Activated CD4-positive, alpha-beta T cell treated with anti-CD3 and anti-CD28 coated beads for 36 hours (primary cell): ENCODE measurements at regions of chr12 and their contacts with region 1.

Region 1: DNA sequence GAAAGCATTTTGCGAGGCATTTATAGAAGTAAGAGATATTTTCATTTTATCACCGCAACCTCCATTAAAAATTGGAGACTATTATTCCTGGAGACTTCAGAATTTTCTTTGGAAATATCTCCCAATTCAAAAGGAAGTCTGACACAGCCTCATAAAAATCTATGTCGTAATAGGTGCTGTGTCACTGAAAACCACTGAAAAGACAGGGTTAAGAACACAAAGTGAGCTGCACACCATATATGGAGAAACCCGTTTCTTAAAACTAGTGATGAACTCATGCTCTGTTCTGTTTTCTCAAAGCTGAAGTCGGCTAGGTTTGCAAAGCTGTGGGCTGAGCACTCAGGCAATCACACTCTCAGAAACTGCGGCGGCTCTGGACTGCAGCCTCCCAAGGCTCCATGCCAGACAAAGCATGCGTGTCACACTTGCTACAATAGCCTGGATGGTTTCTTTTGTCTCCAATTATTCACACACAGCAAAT is at the start of gene GLIPR1:
- DNase-seq: peak; percentile 86
- ATAC-seq: peak; percentile 83
- H3K4me3 Mint-ChIP-seq: peak within 1 kb of the TSS; percentile 93
- H3K27ac Mint-ChIP-seq: peak within 1 kb of the TSS; percentile 89
- H3K4me1 Mint-ChIP-seq: peaks cover 90% of the 10 kb centered on the region
- H3K27me3 Mint-ChIP-seq: no peaks in the 10 kb centered on the region
- total RNA-seq, gene GLIPR1: 8.7 to 9.3 TPM

Region 2: DNA sequence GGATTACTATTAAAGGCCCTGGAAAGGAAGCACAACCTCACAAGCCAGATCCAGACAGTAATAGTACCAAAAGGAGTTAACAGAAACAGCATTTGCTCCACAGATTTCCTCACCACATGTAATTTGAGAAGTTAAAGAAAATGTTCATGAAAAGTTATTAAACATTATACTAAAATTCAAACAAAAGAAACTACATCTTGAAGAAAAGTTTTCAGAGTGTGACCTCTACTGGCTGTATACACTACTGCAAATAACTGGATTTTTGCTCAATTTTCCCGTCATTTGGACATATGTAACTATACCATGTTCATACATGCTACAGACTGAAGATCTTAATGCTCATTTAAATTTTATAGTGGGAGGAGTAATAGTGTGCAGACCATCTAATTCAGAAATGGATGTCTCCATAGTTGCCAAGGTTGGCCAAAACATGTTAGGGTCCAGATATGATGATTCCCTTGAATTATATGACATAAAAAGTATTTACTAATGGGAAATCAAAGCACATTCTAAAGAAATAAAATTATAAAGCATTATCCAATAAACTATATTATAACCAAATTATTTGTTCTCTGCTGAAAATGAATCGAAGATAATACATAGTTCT is 25.3 kb after region 1 on chr12:
- CTCF ChIA-PET with region 1: interaction called, 147 read pairs
- POLR2A ChIA-PET with region 1: interaction called, 9 read pairs
- intact Hi-C with region 1: loop called (anchors 1 kb)
- DNase-seq: no peak
- ATAC-seq: no peak
- H3K4me3 Mint-ChIP-seq: no peak overlapping the region
- H3K27ac Mint-ChIP-seq: peak overlapping the region; percentile 11
- H3K4me1 Mint-ChIP-seq: peaks cover 30% of the 10 kb centered on the region
- H3K27me3 Mint-ChIP-seq: no peaks in the 10 kb centered on the region

Region 3: GRCh38 chr12:75641031-75641780 is 160.7 kb after region 1 on chr12:
- CTCF ChIA-PET with region 1: no interaction called
- POLR2A ChIA-PET with region 1: interaction called, 4 read pairs
- intact Hi-C with region 1: loop called in 1 of 2 experiments (anchors 5 kb)
- DNase-seq: peak; percentile 65
- ATAC-seq: peak; percentile 93
- H3K4me3 Mint-ChIP-seq: no peak overlapping the region
- H3K27ac Mint-ChIP-seq: peak overlapping the region; percentile 34
- H3K4me1 Mint-ChIP-seq: peaks cover 19% of the 10 kb centered on the region
- H3K27me3 Mint-ChIP-seq: peaks cover 11% of the 10 kb centered on the region

Region 4: DNA sequence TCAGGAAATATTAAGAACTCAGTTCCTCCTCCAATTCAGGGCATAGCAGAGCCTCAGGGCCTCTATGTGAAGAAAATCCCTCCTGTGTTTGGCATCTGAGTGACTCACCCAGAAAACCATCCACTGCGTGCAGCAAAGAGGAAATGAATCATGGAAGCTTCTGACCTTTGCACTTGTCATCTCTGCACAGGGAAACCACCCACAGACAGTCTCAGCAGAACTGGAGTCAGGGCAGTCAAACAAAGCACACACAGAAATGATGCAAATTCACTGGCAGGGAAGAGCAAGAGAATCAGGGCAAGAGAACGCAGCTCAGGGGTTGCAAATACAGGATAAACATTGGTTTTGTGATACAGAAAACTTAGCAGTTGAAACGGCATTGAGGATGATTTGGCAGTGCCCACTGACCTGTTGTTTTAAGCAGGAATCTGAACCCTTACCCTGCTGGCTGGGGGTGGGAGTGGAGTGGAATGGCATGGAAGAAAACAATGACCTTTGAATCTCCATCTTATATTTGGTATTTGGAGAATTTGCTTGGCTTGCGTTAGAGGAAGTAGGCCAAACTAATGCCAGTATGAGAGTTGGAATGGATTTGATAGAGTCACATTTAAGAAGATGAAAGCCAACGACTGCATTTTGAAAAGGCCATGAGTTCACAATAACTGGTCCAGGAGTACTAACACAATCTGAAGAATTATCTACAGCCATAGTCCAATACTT is 497.6 kb after region 1 on chr12:
- CTCF ChIA-PET with region 1: no interaction called
- POLR2A ChIA-PET with region 1: no interaction called
- intact Hi-C with region 1: loop called (anchors 1 to 2 kb)
- DNase-seq: peak; percentile 85
- ATAC-seq: peak; percentile 80
- H3K4me3 Mint-ChIP-seq: peak overlapping the region; percentile 59
- H3K27ac Mint-ChIP-seq: peak overlapping the region; percentile 100
- H3K4me1 Mint-ChIP-seq: peaks cover 69% of the 10 kb centered on the region
- H3K27me3 Mint-ChIP-seq: no peaks in the 10 kb centered on the region

Region 5: DNA sequence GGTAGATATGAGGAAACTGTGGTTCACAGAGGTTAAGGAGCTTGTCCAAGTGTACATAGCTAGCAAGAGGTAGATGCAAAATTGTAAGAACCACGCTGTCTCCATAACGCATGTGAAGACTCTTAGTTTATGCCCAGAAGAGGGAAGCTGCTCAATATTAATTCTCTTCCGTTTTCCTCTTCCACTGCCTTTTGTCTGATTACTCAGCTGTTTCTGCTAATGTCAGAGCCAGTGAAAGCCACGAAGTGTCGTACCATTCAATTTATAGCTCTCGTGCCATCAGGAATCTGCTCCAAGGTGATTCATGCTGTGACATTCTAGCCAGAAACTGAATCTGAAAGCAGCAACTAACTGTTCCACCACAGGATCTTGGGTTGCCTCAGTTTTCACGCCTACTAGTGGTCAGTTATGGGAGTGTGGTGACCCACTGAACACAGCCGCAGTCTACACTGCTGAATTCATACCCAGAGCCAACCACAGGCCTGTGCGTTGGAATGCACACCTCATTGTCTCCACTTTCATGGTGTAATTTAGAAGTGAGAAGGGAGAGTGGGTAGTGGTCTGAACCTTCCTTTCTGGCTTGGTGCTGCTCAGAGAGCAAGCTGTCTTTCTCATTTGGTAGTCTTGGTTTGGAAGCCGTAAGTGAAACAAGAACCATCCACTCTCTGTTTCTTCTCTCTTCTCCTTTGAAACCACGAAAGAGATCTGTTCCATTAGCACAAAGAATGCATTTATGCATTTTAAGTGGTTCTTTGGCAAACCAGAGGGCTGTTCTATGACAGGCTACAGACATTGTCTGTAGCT is 678.2 kb after region 1 on chr12:
- CTCF ChIA-PET with region 1: no interaction called
- POLR2A ChIA-PET with region 1: no interaction called
- intact Hi-C with region 1: loop called (anchors 2 to 10 kb)
- DNase-seq: peak; percentile 85
- ATAC-seq: peak; percentile 97
- H3K4me3 Mint-ChIP-seq: peak overlapping the region; percentile 18
- H3K27ac Mint-ChIP-seq: peak overlapping the region; percentile 26
- H3K4me1 Mint-ChIP-seq: peaks cover 15% of the 10 kb centered on the region
- H3K27me3 Mint-ChIP-seq: peaks cover 2% of the 10 kb centered on the region

Region 6: GRCh38 chr12:76559400-76560085 is 1079.0 kb after region 1 on chr12 and contains the start of gene OSBPL8:
- CTCF ChIA-PET with region 1: no interaction called
- POLR2A ChIA-PET with region 1: no interaction called
- intact Hi-C with region 1: loop called in 1 of 2 experiments (anchors 1 kb)
- DNase-seq: peak; percentile 98
- ATAC-seq: peak; percentile 70
- H3K4me3 Mint-ChIP-seq: peak within 1 kb of the TSS; percentile 86
- H3K27ac Mint-ChIP-seq: peak within 1 kb of the TSS; percentile 98
- H3K4me1 Mint-ChIP-seq: peaks cover 24% of the 10 kb centered on the region
- H3K27me3 Mint-ChIP-seq: no peaks in the 10 kb centered on the region
- total RNA-seq, gene OSBPL8: 70.2 to 78.5 TPM